PC-3 (cell line): ENCODE measurements at regions of chr19 and their contacts with region 1.

Region 1: GRCh38 chr19:1856698-1857603 is 6.4 kb downstream of the KLF16 start:
- DNase-seq: peak; percentile 44
- ATAC-seq: peak; percentile 62
- H3K4me3 ChIP-seq: no peak overlapping the region
- H3K27ac ChIP-seq: no peak overlapping the region
- H3K4me1 ChIP-seq: peaks cover 15% of the 10 kb centered on the region; the same call in 1 of the 2 replicates
- H3K27me3 ChIP-seq: no peaks in the 10 kb centered on the region
- CTCF ChIP-seq: no peak

Region 2: DNA sequence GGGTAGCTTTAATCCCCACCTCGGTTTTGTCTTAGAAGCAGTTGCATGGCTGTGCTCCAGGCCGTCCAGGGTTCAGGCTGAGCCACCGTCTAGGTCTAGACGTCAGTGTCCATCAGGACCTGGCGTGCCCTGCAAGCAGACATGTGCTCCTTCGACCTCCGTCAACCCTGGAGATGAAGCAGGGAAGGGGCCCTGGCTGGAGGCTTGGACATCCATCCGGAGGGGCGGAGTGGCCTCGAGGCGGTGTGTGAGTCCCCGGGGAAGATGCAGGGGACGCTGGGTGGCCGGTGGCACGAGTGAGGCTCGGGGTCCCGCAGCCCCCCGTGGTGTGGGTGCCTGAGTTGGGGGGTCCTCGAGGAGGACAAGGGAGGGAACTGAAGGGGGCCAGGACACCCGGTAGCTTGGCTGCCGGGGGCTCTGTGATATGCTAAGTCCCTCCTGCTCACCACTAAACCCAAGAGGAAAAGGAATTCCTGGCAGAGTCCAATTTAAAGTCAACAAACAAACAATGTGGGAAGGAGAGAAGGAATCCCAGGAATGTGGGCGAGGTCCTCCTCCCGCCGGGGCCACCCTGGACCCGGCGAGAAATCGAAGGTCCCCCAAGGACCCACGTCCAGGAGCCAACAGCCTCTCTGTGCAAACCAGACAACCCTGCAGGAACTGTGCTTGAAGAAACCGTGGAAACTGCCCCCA is 1074.6 kb before region 1 on chr19:
- CTCF ChIA-PET with region 1: no interaction called
- POLR2A ChIA-PET with region 1: interaction called, 13 read pairs
- intact Hi-C with region 1: no loop called
- DNase-seq: peak; percentile 86
- ATAC-seq: peak; percentile 80
- H3K4me3 ChIP-seq: peak overlapping the region; percentile 75
- H3K27ac ChIP-seq: peak overlapping the region; percentile 86
- H3K4me1 ChIP-seq: peaks cover 12% of the 10 kb centered on the region; the same call in 1 of the 2 replicates
- H3K27me3 ChIP-seq: no peaks in the 10 kb centered on the region
- CTCF ChIP-seq: no peak

Region 3: GRCh38 chr19:1794424-1795172 is 62.4 kb before region 1 on chr19:
- CTCF ChIA-PET with region 1: interaction called, 10 read pairs
- POLR2A ChIA-PET with region 1: no interaction called
- intact Hi-C with region 1: no loop called
- DNase-seq: no peak
- ATAC-seq: no peak
- H3K4me3 ChIP-seq: no peak overlapping the region
- H3K27ac ChIP-seq: no peak overlapping the region
- H3K4me1 ChIP-seq: no peaks in the 10 kb centered on the region; the same call in 1 of the 2 replicates
- H3K27me3 ChIP-seq: no peaks in the 10 kb centered on the region
- CTCF ChIP-seq: no peak